Heart right ventricle (tissue), 16 donors: ENCODE measurements at regions of chr6 and their contacts with region 1.

Region 1: GRCh38 chr6:81683928-81684327 is 68.6 kb downstream of the TENT5A start:
- DNase-seq: no peak
- ATAC-seq: no peak
- H3K4me3 ChIP-seq: no peak overlapping the region
- H3K27ac ChIP-seq: no peak overlapping the region
- H3K4me1 ChIP-seq: peaks cover 0 to 20% (median 9%) of the 10 kb centered on the region in 9 donors
- H3K27me3 ChIP-seq: no peaks in the 10 kb centered on the region
- CTCF ChIP-seq: no peak

Region 2: DNA sequence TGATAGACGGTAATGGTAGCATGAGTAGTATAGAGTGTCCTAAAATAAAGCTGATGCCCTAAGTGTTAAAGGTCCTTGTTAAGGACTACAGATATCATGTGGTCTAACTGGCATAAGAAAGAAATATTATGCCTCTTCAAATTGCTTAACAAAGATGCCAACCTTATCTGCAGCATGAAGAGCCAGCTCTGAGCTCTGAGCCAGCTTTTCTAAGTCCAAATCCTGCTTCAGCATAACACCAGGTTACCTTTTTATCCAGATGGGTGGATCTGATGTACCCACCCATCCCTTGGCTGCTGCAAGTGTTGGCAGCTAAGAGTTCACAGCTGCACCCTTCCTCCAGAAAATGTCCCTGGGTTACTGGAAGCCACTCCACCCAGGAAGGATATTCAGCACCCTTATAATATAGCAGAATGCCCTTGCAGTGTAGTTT is 15.3 kb before region 1 on chr6:
- intact Hi-C with region 1: loop called in 1 of 10 experiments (anchors 1 kb)
- DNase-seq: peak; percentile 9 to 10
- ATAC-seq: peak; percentile 65 to 97 (median 84)
- H3K4me3 ChIP-seq: no peak overlapping the region
- H3K27ac ChIP-seq: peak overlapping the region in 5 of 10 donors; percentile 40 to 53 (median 43)
- H3K4me1 ChIP-seq: peaks cover 0 to 21% (median 4%) of the 10 kb centered on the region in 9 donors
- H3K27me3 ChIP-seq: no peaks in the 10 kb centered on the region
- CTCF ChIP-seq: no peak